Endothelial cell of umbilical vein (primary cell): ENCODE measurements at regions of chr1 and their contacts with region 1.

Region 1: GRCh38 chr1:88998716-88999115 is 6.3 kb upstream of the KYAT3 start:
- DNase-seq: peak; percentile 69
- H3K4me3 ChIP-seq: no peak overlapping the region
- H3K27ac ChIP-seq: no peak overlapping the region
- H3K4me1 ChIP-seq: peaks cover 6% of the 10 kb centered on the region
- H3K27me3 ChIP-seq: no peaks in the 10 kb centered on the region
- CTCF ChIP-seq: peak; percentile 21 to 24
- POLR2A ChIP-seq: no peak

Region 2: DNA sequence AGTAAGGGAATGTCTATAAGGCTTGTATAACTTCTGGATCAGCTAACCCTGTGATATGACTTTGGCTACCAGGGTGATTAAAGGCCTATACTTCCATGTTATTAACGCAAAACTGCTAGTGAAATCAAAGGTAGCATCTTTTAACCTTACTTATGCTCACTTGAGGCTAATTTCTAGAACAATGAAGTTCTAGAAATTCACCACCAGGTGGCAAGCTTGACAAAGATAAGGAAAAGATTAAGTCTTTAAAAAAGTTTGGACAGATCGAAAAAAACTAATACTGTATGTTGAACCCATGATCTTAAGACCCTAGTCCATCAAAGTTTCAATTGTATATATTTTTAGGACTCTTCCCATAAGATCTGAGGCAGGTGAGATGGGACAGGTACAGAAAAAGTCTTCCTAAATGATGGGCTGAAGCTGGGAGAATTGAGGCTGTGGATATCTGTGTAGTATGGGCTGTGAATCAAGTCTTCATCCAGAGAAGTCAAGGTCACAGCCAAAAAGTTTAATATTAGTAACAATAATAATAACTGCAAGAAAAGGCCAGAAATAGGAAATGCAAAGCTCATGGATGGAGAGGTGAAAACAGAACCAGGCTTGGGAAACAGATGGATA is 25.1 kb before region 1 on chr1:
- CTCF ChIA-PET with region 1: interaction called, 11 read pairs
- POLR2A ChIA-PET with region 1: no interaction called
- dilution Hi-C with region 1: no loop called
- intact Hi-C with region 1: loop called (anchors 1 kb)
- DNase-seq: peak; percentile 55
- H3K4me3 ChIP-seq: no peak overlapping the region
- H3K27ac ChIP-seq: no peak overlapping the region
- H3K4me1 ChIP-seq: no peaks in the 10 kb centered on the region
- H3K27me3 ChIP-seq: no peaks in the 10 kb centered on the region
- CTCF ChIP-seq: peak; percentile 34 to 35
- POLR2A ChIP-seq: no peak

Region 3: GRCh38 chr1:88983791-88984559 is 14.7 kb before region 1 on chr1:
- CTCF ChIA-PET with region 1: interaction called, 17 read pairs
- POLR2A ChIA-PET with region 1: no interaction called
- dilution Hi-C with region 1: no loop called
- intact Hi-C with region 1: no loop called
- DNase-seq: peak; percentile 65
- H3K4me3 ChIP-seq: peak overlapping the region in 1 of 3 experiments; percentile 34
- H3K27ac ChIP-seq: peak overlapping the region; percentile 34
- H3K4me1 ChIP-seq: peaks cover 19% of the 10 kb centered on the region
- H3K27me3 ChIP-seq: no peaks in the 10 kb centered on the region
- CTCF ChIP-seq: peak; percentile 48 to 50
- POLR2A ChIP-seq: no peak

Region 4: GRCh38 chr1:89022167-89022959 is 23.6 kb after region 1 on chr1 and contains the start of gene GBP3:
- CTCF ChIA-PET with region 1: interaction called, 11 read pairs
- POLR2A ChIA-PET with region 1: no interaction called
- dilution Hi-C with region 1: no loop called
- intact Hi-C with region 1: no loop called
- DNase-seq: peak; percentile 76
- H3K4me3 ChIP-seq: peak within 1 kb of the TSS; percentile 59 to 97 (median 87)
- H3K27ac ChIP-seq: peak within 1 kb of the TSS; percentile 74
- H3K4me1 ChIP-seq: peaks cover 11% of the 10 kb centered on the region
- H3K27me3 ChIP-seq: no peaks in the 10 kb centered on the region
- CTCF ChIP-seq: no peak
- POLR2A ChIP-seq: no peak
- total RNA-seq, gene GBP3: 7.3 and 12.7 TPM in 2 replicates

Region 5: GRCh38 chr1:89276690-89277089 is 278.0 kb after region 1 on chr1:
- CTCF ChIA-PET with region 1: no interaction called
- POLR2A ChIA-PET with region 1: no interaction called
- dilution Hi-C with region 1: no loop called
- intact Hi-C with region 1: loop called (anchors 1 kb)
- DNase-seq: no peak
- H3K4me3 ChIP-seq: no peak overlapping the region
- H3K27ac ChIP-seq: no peak overlapping the region
- H3K4me1 ChIP-seq: no peaks in the 10 kb centered on the region
- H3K27me3 ChIP-seq: no peaks in the 10 kb centered on the region
- CTCF ChIP-seq: no peak
- POLR2A ChIP-seq: no peak

Region 6: DNA sequence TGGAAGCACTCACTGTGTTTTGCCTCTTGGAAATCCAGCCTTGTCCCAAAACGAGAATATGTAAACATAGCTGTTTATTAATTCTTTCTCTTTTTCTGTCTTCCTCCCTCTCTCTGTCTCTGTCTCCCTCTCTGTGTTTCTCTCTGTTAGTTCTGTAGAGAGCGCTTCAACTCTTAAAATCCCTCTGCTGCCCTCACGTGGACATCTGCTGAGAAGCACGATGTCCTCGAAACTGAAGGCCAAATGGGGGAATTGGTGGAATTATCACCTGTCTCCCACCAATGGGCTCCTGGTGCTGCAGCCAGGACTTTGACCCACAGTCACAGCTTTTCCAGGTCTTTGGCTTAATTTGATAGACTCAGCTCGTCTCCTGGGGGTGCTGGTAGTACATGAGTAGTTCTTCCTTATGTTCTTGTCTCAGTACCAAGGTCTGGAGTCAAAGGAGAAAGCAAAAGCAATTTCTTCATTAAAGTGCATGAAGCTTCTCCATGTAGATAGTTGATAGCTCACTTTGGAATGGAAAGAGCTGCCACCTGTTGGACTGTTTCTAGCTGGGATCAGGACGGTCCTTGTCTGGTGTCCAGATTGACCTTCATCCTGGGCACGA is 359.7 kb after region 1 on chr1:
- CTCF ChIA-PET with region 1: interaction called, 14 read pairs
- POLR2A ChIA-PET with region 1: no interaction called
- dilution Hi-C with region 1: no loop called
- intact Hi-C with region 1: loop called (anchors 1 kb)
- DNase-seq: peak; percentile 62
- H3K4me3 ChIP-seq: no peak overlapping the region
- H3K27ac ChIP-seq: no peak overlapping the region
- H3K4me1 ChIP-seq: no peaks in the 10 kb centered on the region
- H3K27me3 ChIP-seq: peaks cover 4 to 10% of the 10 kb centered on the region in 2 experiments
- CTCF ChIP-seq: peak; percentile 63 to 75
- POLR2A ChIP-seq: no peak

Region 7: GRCh38 chr1:89454845-89455521 is 456.3 kb after region 1 on chr1:
- CTCF ChIA-PET with region 1: interaction called, 21 read pairs
- POLR2A ChIA-PET with region 1: no interaction called
- dilution Hi-C with region 1: no loop called
- intact Hi-C with region 1: loop called (anchors 1 kb)
- DNase-seq: peak; percentile 58
- H3K4me3 ChIP-seq: no peak overlapping the region
- H3K27ac ChIP-seq: no peak overlapping the region
- H3K4me1 ChIP-seq: no peaks in the 10 kb centered on the region
- H3K27me3 ChIP-seq: peaks cover 0 to 7% of the 10 kb centered on the region in 2 experiments
- CTCF ChIP-seq: peak; percentile 22 to 39
- POLR2A ChIP-seq: no peak